ENCODE measurements at regions of chrX and their contacts with region 1.

Region 1: GRCh38 chrX:39096599-39096998 is 295.3 kb downstream of the MID1IP1 start:
- DNase-seq: no peak
- H3K4me3 ChIP-seq: no peak overlapping the region
- H3K27ac ChIP-seq: no peak overlapping the region
- H3K4me1 ChIP-seq: no peaks in the 10 kb centered on the region
- H3K27me3 ChIP-seq: no peaks in the 10 kb centered on the region
- CTCF ChIP-seq: no peak
- EP300 ChIP-seq: no peak
- POLR2A ChIP-seq: no peak

Region 2: GRCh38 chrX:38142610-38143009 is 954.0 kb before region 1 on chrX:
- in situ Hi-C with region 1: no loop called
- intact Hi-C with region 1: no loop called
- DNase-seq: no peak
- H3K4me3 ChIP-seq: no peak overlapping the region
- H3K27ac ChIP-seq: no peak overlapping the region
- H3K4me1 ChIP-seq: no peaks in the 10 kb centered on the region
- H3K27me3 ChIP-seq: no peaks in the 10 kb centered on the region
- CTCF ChIP-seq: no peak
- EP300 ChIP-seq: no peak
- POLR2A ChIP-seq: no peak

Region 3: GRCh38 chrX:39162322-39162735 is 65.7 kb after region 1 on chrX:
- in situ Hi-C with region 1: no loop called
- intact Hi-C with region 1: loop called (anchors 5 kb)
- DNase-seq: peak; percentile 57
- H3K4me3 ChIP-seq: peak overlapping the region in 1 of 4 donors; percentile 25
- H3K27ac ChIP-seq: no peak overlapping the region
- H3K4me1 ChIP-seq: peaks cover 0 to 8% (median 0%) of the 10 kb centered on the region in 4 donors
- H3K27me3 ChIP-seq: no peaks in the 10 kb centered on the region
- CTCF ChIP-seq: peak in 2 of 5 experiments; percentile 5 to 13
- EP300 ChIP-seq: no peak
- POLR2A ChIP-seq: no peak

Measured in transverse colon (tissue), 4 donors.